ENCODE measurements at regions of chr16 and their contacts with region 1.

Region 1: DNA sequence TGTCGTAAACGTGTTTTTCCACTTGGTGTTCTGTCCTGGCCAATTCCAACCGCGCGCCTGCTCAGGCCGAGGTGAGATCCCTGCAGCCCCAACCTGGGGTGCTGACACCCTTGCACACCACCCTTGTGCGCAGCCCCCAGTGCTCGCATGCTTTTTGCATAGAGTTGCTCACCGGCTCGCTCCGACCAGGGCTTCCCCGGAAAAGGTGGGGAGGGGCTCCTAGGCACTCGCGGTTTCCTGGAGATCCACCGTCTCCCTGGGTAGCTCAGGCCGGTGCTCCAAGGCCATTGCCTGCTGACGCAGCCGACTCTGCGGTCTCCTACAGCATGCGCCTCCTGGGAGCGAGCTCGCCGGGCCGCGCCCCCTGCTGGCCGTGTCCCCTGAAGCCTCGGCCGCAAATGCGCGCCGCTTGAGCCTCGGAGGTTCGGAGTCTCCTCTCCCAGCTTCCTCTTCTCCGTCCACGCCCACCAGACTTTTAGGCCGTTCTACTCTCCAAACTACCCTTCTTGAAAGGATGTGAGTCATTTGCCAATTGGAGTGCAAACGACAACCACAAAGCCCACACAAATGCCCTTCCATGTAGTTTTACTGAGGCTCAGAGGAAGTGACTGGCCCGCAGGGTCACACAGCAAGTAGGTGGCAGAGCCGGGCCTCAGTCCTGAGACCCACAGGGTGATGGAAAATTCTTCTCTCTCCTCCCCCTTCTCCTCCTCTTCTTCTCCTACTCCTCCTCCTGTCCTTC is 7.2 kb upstream of the PDP2 start:
- DNase-seq: peak; percentile 93
- H3K4me3 ChIP-seq: peak overlapping the region in 3 of 4 donors; percentile 23 to 35 (median 35)
- H3K27ac ChIP-seq: peak overlapping the region; percentile 3 to 52 (median 48)
- H3K4me1 ChIP-seq: peaks cover 0 to 10% (median 6%) of the 10 kb centered on the region in 4 donors
- H3K27me3 ChIP-seq: no peaks in the 10 kb centered on the region
- CTCF ChIP-seq: peak; percentile 51 to 89 (median 80)
- EP300 ChIP-seq: no peak
- POLR2A ChIP-seq: no peak

Region 2: GRCh38 chr16:66406534-66407221 is 466.4 kb before region 1 on chr16:
- intact Hi-C with region 1: loop called (anchors 1 kb)
- DNase-seq: peak; percentile 90
- H3K4me3 ChIP-seq: peak overlapping the region; percentile 26 to 53 (median 46)
- H3K27ac ChIP-seq: peak overlapping the region in 1 of 4 donors; percentile 27
- H3K4me1 ChIP-seq: peaks cover 0 to 8% (median 7%) of the 10 kb centered on the region in 4 donors
- H3K27me3 ChIP-seq: peaks cover 0 to 22% (median 3%) of the 10 kb centered on the region in 3 donors
- CTCF ChIP-seq: peak; percentile 66 to 92 (median 80)
- EP300 ChIP-seq: no peak
- POLR2A ChIP-seq: no peak

Region 3: GRCh38 chr16:66608241-66609138 is 264.6 kb before region 1 on chr16:
- intact Hi-C with region 1: loop called (anchors 2 kb)
- DNase-seq: peak; percentile 91
- H3K4me3 ChIP-seq: no peak overlapping the region
- H3K27ac ChIP-seq: peak overlapping the region; percentile 1 to 48 (median 32)
- H3K4me1 ChIP-seq: peaks cover 0 to 33% (median 29%) of the 10 kb centered on the region in 4 donors
- H3K27me3 ChIP-seq: peaks cover 0 to 21% (median 13%) of the 10 kb centered on the region in 3 donors
- CTCF ChIP-seq: peak; percentile 58 to 84 (median 70)
- EP300 ChIP-seq: no peak
- POLR2A ChIP-seq: no peak

Region 4: DNA sequence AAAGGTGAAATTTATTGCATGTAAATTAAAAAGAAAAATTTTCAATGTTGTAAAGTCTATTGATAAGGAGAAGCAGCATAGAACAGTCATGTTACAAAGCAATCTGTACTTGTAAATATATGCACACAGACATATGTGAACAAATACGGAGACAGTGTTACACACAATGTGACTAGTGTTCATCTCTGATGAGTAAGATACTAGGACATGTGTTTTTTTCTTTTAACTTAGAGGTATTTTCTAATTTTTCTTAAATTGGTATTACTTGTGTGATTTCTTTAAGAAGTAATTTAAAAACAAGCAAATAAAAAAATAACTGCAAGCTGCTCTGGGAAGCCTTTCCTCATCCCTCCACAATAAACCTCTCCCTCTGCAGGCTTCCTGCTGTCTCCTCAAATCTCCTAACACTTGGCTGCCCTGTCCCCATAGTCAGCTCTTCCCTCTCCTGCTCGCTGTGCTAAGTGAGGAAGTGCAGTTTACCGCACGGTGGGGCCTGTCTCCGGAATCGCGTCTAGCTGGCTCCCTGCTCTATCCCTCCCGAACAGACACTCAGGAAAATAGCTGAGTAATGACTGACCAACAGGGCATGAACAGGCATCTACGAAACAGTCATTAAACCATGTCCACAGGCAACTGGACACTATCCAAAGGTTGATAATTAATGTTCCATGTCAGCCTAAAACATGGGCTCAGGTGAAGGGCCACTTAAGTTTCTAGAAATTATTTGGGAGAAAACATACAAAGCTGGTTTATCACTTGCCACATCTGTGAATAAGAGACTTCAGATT is 212.5 kb before region 1 on chr16:
- intact Hi-C with region 1: loop called (anchors 5 kb)
- DNase-seq: peak; percentile 87
- H3K4me3 ChIP-seq: no peak overlapping the region
- H3K27ac ChIP-seq: peak overlapping the region; percentile 67 to 80 (median 74)
- H3K4me1 ChIP-seq: peaks cover 0 to 35% (median 27%) of the 10 kb centered on the region in 4 donors
- H3K27me3 ChIP-seq: no peaks in the 10 kb centered on the region
- CTCF ChIP-seq: peak in 1 of 4 experiments; percentile 10
- EP300 ChIP-seq: no peak
- POLR2A ChIP-seq: no peak

Region 5: GRCh38 chr16:66728117-66728787 is 144.9 kb before region 1 on chr16:
- intact Hi-C with region 1: loop called (anchors 5 kb)
- DNase-seq: peak; percentile 67
- H3K4me3 ChIP-seq: no peak overlapping the region
- H3K27ac ChIP-seq: peak overlapping the region in 1 of 4 donors; percentile 36
- H3K4me1 ChIP-seq: peaks cover 0 to 18% (median 10%) of the 10 kb centered on the region in 4 donors
- H3K27me3 ChIP-seq: no peaks in the 10 kb centered on the region
- CTCF ChIP-seq: peak; percentile 35 to 69 (median 60)
- EP300 ChIP-seq: no peak
- POLR2A ChIP-seq: no peak

Measured in sigmoid colon (tissue), 7 donors.